ENCODE measurements at regions of chr2 and their contacts with region 1.

Region 1: GRCh38 chr2:162828544-162828943 is 10.0 kb downstream of the KCNH7 start:
- DNase-seq: no peak
- H3K4me3 ChIP-seq: no peak overlapping the region
- H3K27ac ChIP-seq: no peak overlapping the region
- H3K4me1 ChIP-seq: no peaks in the 10 kb centered on the region
- H3K27me3 ChIP-seq: no peaks in the 10 kb centered on the region
- CTCF ChIP-seq: no peak
- POLR2A ChIP-seq: no peak

Region 2: GRCh38 chr2:162390801-162391200 is 437.7 kb before region 1 on chr2:
- CTCF ChIA-PET with region 1: no interaction called
- POLR2A ChIA-PET with region 1: no interaction called
- dilution Hi-C with region 1: no loop called
- intact Hi-C with region 1: loop called (anchors 5 kb)
- DNase-seq: no peak
- H3K4me3 ChIP-seq: no peak overlapping the region
- H3K27ac ChIP-seq: no peak overlapping the region
- H3K4me1 ChIP-seq: no peaks in the 10 kb centered on the region
- H3K27me3 ChIP-seq: peaks cover 0 to 2% of the 10 kb centered on the region in 2 experiments
- CTCF ChIP-seq: no peak
- POLR2A ChIP-seq: no peak

Measured in endothelial cell of umbilical vein (primary cell).